Calu3 (cell line): ENCODE measurements at regions of chr3 and their contacts with region 1.

Region 1: DNA sequence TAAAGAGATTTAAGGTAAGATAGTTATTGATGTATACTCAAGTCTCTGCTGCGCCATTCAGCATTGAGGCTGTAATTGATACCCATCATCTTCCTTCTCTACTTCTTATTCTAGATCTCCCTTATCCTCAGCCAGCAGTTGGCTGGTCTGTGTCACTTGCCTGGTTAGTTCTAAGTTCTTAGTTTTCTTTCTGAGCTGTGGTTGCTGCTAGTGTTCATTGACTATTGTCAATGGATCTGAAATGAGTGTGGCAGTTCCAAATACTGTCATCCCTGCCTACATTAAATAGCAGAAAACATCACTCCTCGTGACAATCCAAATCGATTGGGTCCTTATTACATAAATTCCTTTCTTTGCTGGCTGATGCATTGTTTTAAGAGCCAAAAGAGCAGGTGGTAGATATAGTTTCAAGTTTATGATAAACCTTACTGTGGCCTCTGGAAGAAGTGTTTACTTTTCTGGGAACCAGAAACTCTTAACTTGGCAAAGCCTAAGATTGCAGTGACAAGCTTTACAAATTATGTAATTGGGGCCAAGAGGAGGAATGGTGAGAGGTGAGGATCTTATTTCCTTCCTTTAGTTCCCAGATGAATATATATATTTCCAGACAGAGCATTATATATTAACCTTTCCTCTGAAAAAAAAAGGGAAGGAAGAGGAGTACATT is 168.0 kb downstream of the GMNC start:
- DNase-seq: no peak
- H3K4me3 Mint-ChIP-seq: no peak overlapping the region
- H3K27ac Mint-ChIP-seq: peak overlapping the region; percentile 10
- H3K4me1 Mint-ChIP-seq: peaks cover 38% of the 10 kb centered on the region
- H3K27me3 Mint-ChIP-seq: no peaks in the 10 kb centered on the region
- CTCF ChIP-seq: no peak

Region 2: GRCh38 chr3:190631295-190631694 is 63.2 kb before region 1 on chr3:
- CTCF ChIA-PET with region 1: no interaction called
- intact Hi-C with region 1: loop called (anchors 5 kb)
- DNase-seq: no peak
- H3K4me3 Mint-ChIP-seq: no peak overlapping the region
- H3K27ac Mint-ChIP-seq: peak overlapping the region; percentile 33
- H3K4me1 Mint-ChIP-seq: peaks cover 21% of the 10 kb centered on the region
- H3K27me3 Mint-ChIP-seq: no peaks in the 10 kb centered on the region
- CTCF ChIP-seq: no peak

Region 3: DNA sequence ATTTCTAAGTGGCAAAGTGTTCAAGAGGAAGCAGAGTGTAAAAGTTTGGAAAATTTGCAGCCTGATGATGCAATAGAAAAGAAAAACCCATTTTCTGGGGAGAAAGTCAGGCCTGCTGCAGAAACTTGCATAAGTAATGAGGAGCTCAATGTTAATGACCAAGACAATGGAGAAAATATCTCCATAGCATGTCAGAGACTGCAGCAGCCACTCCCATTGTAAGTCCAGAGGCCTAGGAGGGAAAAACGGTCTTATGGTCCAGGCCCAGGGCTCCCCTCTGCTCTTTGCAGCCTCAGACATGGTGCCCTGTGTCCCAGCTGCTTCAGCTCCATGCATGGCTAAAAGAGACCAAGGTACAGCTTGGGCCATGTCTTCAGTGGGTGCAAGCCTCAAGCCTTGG is 264.6 kb after region 1 on chr3:
- CTCF ChIA-PET with region 1: no interaction called
- intact Hi-C with region 1: no loop called
- DNase-seq: no peak
- H3K4me3 Mint-ChIP-seq: no peak overlapping the region
- H3K27ac Mint-ChIP-seq: no peak overlapping the region
- H3K4me1 Mint-ChIP-seq: no peaks in the 10 kb centered on the region
- H3K27me3 Mint-ChIP-seq: no peaks in the 10 kb centered on the region
- CTCF ChIP-seq: no peak